ENCODE measurements at regions of chr4 and their contacts with region 1.

Region 1: GRCh38 chr4:8176547-8177399 is 18.2 kb upstream of the ABLIM2 start:
- DNase-seq: peak; percentile 65
- ATAC-seq: peak; percentile 94
- H3K4me3 ChIP-seq: peak overlapping the region in 1 of 3 experiments; percentile 31; a peak in 1 of 6 replicates
- H3K27ac ChIP-seq: no peak overlapping the region
- H3K4me1 ChIP-seq: peaks cover 26% of the 10 kb centered on the region
- H3K27me3 ChIP-seq: peaks cover 10 to 30% of the 10 kb centered on the region in 2 experiments; a peak in 3 of 5 replicates
- CTCF ChIP-seq: peak; percentile 96
- EP300 ChIP-seq: no peak
- POLR2A ChIP-seq: no peak
- RAD21 ChIP-seq: peak; percentile 90

Region 2: DNA sequence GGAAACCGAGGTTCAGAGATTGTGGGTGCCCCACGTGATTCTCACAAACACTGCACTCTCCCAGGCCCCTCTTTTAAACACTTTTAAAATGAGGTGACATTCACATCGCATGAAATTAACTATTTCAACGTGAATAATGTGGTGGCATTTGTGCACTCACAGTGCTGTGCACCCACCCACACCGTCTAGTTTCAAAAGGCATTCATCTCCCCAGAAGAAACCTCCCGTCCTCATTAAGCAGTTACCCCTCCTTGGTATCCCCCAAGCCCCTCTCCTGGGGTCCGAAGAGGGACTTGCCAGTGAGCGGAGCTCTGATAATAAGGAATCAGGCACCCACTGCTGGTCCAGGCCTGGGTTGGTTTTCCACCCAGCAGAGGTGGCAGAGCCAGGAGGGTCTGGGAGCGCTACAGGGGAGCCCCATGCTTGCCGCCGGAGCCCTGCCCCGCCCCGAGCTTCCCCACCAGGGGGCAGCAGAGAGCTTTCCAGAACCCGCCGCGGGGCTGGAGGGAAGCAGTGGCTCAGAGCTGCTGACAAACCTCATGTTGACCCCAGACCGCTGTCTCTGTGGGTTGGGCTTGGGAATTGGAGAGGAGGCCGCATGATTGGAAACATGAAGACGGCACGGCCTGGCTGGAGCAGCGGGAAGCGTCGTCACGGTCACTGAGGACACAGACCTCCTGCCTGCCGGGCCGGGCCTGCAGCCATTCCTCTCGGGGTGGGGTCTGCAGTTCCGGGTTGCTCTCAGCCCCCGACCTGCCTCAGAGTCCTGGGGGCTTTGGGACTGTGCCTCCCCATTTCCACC is 65.3 kb after region 1 on chr4:
- CTCF ChIA-PET with region 1: interaction called, 4 read pairs
- POLR2A ChIA-PET with region 1: interaction called, 4 read pairs
- in situ Hi-C with region 1: no loop called
- intact Hi-C with region 1: loop called (anchors 1 kb)
- DNase-seq: peak; percentile 78
- ATAC-seq: peak; percentile 72
- H3K4me3 ChIP-seq: no peak overlapping the region
- H3K27ac ChIP-seq: no peak overlapping the region
- H3K4me1 ChIP-seq: peaks cover 49% of the 10 kb centered on the region
- H3K27me3 ChIP-seq: no peaks in the 10 kb centered on the region
- CTCF ChIP-seq: peak; percentile 93
- EP300 ChIP-seq: no peak
- POLR2A ChIP-seq: no peak
- RAD21 ChIP-seq: peak; percentile 91

Region 3: DNA sequence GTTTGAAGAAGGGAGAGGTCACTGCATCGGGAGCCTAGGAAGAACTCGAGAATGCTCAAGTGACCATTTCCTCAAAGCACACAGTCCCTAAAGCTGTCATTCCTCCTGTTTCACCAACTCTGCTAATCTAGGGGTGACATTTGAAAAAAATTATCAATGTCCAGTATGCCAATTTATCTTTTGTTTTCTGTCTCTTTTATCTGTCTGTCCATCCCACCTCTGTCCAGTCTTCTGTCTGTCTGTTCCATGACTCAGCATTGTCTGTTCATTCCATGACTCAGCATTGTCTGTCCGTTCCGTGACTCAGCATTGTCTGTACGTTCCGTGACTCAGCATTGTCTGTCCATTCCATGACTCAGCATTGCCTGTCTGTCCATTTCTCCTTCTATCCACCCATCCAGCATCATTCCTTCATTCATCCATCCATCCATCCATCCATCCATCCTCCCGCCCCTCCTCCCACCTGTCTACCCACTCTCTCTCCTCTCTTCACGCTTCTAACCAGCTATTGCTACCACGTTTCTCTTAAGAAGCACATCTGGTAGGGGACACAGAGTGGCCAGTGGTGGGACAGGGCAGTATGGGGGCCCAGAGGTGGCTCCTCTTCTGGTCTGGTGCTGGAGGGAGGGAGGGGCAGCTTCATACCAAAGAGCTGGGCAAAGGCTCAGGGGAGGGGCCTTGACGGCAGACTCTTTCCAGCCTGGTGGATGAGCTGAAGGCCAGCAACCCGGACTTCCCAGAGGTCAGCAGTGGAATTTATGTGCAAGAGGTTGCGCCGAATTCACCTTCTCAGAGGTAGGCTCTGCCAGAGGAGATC is 126.9 kb after region 1 on chr4:
- CTCF ChIA-PET with region 1: no interaction called
- POLR2A ChIA-PET with region 1: no interaction called
- in situ Hi-C with region 1: no loop called
- intact Hi-C with region 1: no loop called
- DNase-seq: peak; percentile 49
- ATAC-seq: peak; percentile 66
- H3K4me3 ChIP-seq: no peak overlapping the region; a peak in 1 of 6 replicates
- H3K27ac ChIP-seq: no peak overlapping the region
- H3K4me1 ChIP-seq: peaks cover 14% of the 10 kb centered on the region
- H3K27me3 ChIP-seq: peaks cover 2 to 26% of the 10 kb centered on the region in 2 experiments; a peak in 2 of 5 replicates
- CTCF ChIP-seq: no peak
- EP300 ChIP-seq: peak in 1 of 2 experiments; percentile 50; a peak in 2 of 4 replicates
- POLR2A ChIP-seq: no peak
- RAD21 ChIP-seq: no peak

Region 4: GRCh38 chr4:8705161-8706145 is 528.7 kb after region 1 on chr4:
- CTCF ChIA-PET with region 1: no interaction called
- POLR2A ChIA-PET with region 1: no interaction called
- in situ Hi-C with region 1: no loop called
- intact Hi-C with region 1: no loop called
- DNase-seq: no peak
- ATAC-seq: 0 out of 3 replicates have a peak, but pooled peaks have one; percentile 16
- H3K4me3 ChIP-seq: no peak overlapping the region
- H3K27ac ChIP-seq: no peak overlapping the region
- H3K4me1 ChIP-seq: no peaks in the 10 kb centered on the region
- H3K27me3 ChIP-seq: peaks cover 10 to 91% of the 10 kb centered on the region in 2 experiments; a peak in 4 of 5 replicates
- CTCF ChIP-seq: no peak
- EP300 ChIP-seq: no peak
- POLR2A ChIP-seq: no peak
- RAD21 ChIP-seq: no peak